ENCODE measurements at regions of chr1 and their contacts with region 1.

Region 1: DNA sequence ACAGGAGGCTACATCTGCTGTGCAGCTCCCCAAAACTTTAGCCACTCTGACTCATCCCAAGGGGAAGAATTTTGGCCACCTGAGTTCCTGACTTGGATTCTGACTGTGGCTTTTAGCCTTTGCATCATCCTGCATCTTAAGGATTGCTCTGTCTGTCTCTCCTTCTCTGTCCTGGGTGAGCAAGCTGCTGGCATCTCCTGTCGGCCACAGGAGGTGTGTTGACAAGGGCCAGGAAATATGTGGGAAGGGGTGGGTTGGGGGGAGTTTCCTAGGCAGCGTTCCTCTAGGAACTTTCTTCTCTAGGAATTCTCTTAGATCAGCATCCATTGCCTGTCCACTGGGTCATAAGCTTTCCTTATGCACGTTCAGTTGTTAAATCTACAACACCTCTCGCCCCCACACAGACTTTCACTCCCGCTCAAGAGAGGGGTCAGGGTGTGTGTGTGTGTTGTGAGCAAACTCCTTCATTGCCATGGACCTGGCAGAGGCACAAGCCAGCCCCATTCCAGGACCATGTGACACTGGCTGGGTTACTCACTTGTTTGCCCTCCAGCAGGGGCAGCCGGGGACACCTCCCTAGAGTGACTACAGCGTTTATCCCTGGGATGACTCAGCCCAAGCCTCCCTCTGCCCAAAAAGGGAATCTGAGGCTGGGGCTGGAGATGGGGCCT is 145.0 kb upstream of the DUSP10 start:
- DNase-seq: peak; percentile 100
- H3K4me3 ChIP-seq: no peak overlapping the region
- H3K27ac ChIP-seq: peak overlapping the region; percentile 93
- H3K4me1 ChIP-seq: peaks cover 46% of the 10 kb centered on the region
- H3K27me3 ChIP-seq: no peaks in the 10 kb centered on the region
- CTCF ChIP-seq: peak in 1 of 2 donors; percentile 49

Region 2: DNA sequence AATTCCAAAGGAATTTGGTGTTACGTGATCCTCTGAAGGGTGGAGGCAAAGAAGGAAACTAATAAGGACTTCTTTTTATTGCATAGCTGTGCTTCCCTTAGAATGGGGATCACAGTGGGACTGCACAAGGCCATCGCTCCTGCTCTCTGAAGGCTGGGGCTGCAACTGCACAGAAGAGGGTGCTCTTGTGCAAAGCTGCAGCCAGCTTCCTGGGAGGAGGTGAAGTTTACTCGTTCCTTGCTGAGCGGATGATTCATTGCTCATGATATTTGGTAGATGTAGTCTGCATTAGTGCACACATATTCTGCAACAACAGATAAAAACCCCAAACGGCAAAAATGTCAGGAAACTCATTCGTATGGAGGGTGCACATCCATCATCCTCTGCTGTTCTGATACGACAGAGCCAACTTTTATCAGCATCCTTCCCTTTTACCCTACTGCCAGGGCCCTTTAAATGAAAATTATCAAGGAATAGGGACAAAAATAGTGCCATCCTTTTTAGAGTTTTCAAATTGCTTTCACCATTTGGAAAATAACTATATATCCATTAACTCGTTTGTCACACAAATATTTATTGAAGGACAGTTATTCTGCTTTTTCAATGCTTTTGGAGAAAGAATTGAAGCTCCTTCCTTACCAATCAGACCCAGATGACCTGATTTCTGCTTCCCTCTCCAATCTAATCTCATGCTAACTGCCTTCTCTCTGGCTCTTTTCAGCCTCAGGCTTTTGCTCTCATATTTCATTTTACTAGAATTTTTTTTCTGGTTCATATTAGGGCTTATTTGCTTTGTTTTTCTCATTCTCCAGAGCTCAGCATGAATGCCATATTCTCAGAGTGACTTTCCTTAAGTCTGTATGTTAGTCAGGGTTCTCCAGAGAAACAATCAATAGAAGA is 408.6 kb before region 1 on chr1:
- CTCF ChIA-PET with region 1: no interaction called
- dilution Hi-C with region 1: no loop called
- in situ Hi-C with region 1: no loop called
- intact Hi-C with region 1: loop called (anchors 1 kb)
- DNase-seq: peak; percentile 79
- H3K4me3 ChIP-seq: no peak overlapping the region
- H3K27ac ChIP-seq: no peak overlapping the region
- H3K4me1 ChIP-seq: peaks cover 13% of the 10 kb centered on the region
- H3K27me3 ChIP-seq: no peaks in the 10 kb centered on the region
- CTCF ChIP-seq: peak; percentile 88 to 98

Region 3: DNA sequence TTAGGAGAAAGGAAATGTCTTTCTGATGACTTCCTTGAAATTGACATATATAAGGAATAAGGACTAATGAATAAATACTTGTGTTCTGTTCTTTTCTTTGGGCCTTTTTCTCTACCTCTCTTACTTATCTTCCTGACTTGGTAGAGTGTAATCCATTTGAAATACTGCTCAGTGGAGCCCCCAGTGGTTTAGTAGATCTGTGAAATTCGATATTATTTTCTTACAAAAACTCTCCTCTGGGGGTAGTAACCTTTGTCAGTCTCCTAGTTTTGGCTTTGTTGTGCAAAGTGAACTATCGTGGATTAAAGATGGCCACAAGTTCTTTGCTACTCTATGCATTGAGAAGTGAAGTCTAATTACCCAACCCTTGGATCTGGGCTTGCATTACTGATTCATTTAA is 193.8 kb before region 1 on chr1:
- CTCF ChIA-PET with region 1: no interaction called
- dilution Hi-C with region 1: no loop called
- in situ Hi-C with region 1: no loop called
- intact Hi-C with region 1: no loop called
- DNase-seq: no peak
- H3K4me3 ChIP-seq: no peak overlapping the region
- H3K27ac ChIP-seq: no peak overlapping the region
- H3K4me1 ChIP-seq: peaks cover 13% of the 10 kb centered on the region
- H3K27me3 ChIP-seq: no peaks in the 10 kb centered on the region
- CTCF ChIP-seq: no peak

Region 4: DNA sequence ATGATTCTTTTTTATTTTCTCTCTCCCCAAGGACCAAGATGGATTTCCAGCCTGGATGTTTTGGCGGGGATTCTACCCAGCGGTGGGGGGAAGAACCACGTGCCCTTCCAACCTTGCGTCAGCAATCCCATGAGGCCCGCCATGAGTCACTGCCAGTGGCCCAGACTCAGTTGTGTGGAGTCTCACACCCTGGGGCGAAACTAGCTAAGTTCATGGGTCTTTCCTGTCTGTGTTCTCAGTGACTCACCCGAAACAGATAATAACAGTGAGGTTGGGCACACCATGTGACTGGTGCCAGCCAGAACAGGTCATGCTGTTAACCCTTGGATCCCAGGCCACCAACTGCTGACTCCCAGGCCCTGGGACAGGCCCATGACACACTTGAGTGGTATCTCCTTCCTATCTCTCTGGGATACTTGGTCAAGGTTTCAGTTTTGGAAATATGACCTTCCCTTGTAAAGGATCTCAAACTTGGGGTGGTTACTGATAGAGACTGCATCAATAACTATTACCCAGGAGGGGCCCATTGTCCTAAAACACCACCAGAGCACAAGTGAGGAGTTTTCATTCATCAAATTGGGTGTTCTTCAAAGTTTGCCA is 47.0 kb before region 1 on chr1:
- CTCF ChIA-PET with region 1: no interaction called
- dilution Hi-C with region 1: loop called (anchors 5 kb)
- in situ Hi-C with region 1: no loop called
- intact Hi-C with region 1: loop called (anchors 2 kb)
- DNase-seq: peak; percentile 100
- H3K4me3 ChIP-seq: no peak overlapping the region
- H3K27ac ChIP-seq: peak overlapping the region; percentile 97
- H3K4me1 ChIP-seq: peaks cover 31% of the 10 kb centered on the region
- H3K27me3 ChIP-seq: no peaks in the 10 kb centered on the region
- CTCF ChIP-seq: no peak

Region 5: DNA sequence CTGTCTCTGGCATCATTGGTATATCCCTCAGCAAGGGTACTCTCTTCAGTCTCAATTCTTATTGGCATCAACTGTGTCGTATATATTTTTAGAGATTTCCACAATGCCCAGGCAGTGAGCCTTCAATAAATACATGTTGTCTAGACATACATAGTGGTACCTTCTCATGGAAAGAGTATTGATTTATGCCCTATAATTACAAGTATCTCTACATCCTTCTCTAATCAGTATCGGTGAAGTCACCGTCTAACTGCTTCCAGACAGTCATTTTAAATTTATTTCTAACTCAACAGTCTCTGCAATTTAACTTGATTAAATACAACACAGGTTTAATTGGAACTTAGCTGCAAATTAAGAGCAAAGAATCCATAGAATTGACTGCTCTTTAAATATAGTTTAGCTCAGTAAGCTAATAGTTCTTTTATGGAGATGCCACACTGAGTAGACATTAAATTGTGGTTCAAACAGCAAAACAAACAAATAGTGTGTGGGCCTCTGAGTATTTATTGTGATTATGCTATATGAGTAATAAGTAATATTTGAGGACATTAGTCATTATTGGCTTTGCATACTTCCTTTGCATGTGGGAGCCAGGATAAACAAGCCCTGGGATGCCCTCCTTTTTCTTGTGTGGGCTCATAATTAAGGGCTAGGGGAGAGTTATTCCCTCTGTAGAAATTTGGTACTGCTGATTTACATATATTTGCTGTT is 18.1 kb before region 1 on chr1:
- CTCF ChIA-PET with region 1: no interaction called
- dilution Hi-C with region 1: no loop called
- in situ Hi-C with region 1: no loop called
- intact Hi-C with region 1: loop called (anchors 2 kb)
- DNase-seq: peak; percentile 77
- H3K4me3 ChIP-seq: no peak overlapping the region
- H3K27ac ChIP-seq: peak overlapping the region; percentile 68
- H3K4me1 ChIP-seq: peaks cover 40% of the 10 kb centered on the region
- H3K27me3 ChIP-seq: no peaks in the 10 kb centered on the region
- CTCF ChIP-seq: no peak

Region 6: GRCh38 chr1:221939607-221940006 is 52.7 kb after region 1 on chr1:
- CTCF ChIA-PET with region 1: no interaction called
- dilution Hi-C with region 1: no loop called
- in situ Hi-C with region 1: no loop called
- intact Hi-C with region 1: no loop called
- DNase-seq: no peak
- H3K4me3 ChIP-seq: no peak overlapping the region
- H3K27ac ChIP-seq: no peak overlapping the region
- H3K4me1 ChIP-seq: no peaks in the 10 kb centered on the region
- H3K27me3 ChIP-seq: no peaks in the 10 kb centered on the region
- CTCF ChIP-seq: no peak

Region 7: DNA sequence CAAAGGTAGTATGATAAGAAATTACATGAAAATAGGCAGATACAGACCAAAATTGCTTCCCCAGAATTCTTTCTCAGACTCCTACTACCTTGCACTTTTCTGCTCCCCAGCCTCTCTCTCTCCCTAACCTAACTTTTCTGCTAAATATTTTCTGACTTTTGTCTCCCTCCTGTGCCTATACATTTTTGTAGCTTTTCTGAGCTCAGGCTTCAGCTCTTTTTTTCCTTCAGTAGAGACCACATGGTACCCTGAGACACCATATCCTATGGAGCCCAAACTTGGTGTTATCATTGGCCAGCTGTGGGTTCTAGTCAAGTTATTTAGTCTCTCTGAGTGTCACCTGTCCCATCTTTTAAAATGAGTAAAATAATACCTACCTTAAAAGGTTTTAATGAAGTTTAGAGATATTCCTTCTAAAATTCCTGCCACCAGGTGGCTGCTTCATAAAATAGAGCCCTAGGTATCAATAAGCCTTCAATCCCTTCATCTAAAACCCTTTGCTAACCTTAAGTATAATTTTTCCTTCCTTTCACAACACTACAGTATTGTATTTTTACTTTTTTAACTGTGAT is 92.7 kb after region 1 on chr1:
- CTCF ChIA-PET with region 1: no interaction called
- dilution Hi-C with region 1: no loop called
- in situ Hi-C with region 1: no loop called
- intact Hi-C with region 1: loop called (anchors 2 kb)
- DNase-seq: no peak
- H3K4me3 ChIP-seq: no peak overlapping the region
- H3K27ac ChIP-seq: no peak overlapping the region
- H3K4me1 ChIP-seq: peaks cover 14% of the 10 kb centered on the region
- H3K27me3 ChIP-seq: no peaks in the 10 kb centered on the region
- CTCF ChIP-seq: peak; percentile 36 to 41

Measured in mammary epithelial cell (primary cell).